ENCODE measurements at regions of chr10 and their contacts with region 1.

Region 1: GRCh38 chr10:89793649-89794254 is 92.4 kb downstream of the KIF20B start:
- DNase-seq: no peak
- ATAC-seq: peak; percentile 61 to 76

Region 2: GRCh38 chr10:89553064-89553734 is 240.6 kb before region 1 on chr10:
- intact Hi-C with region 1: no loop called
- DNase-seq: no peak
- ATAC-seq: peak in 1 of 2 donors; percentile 82

Region 3: DNA sequence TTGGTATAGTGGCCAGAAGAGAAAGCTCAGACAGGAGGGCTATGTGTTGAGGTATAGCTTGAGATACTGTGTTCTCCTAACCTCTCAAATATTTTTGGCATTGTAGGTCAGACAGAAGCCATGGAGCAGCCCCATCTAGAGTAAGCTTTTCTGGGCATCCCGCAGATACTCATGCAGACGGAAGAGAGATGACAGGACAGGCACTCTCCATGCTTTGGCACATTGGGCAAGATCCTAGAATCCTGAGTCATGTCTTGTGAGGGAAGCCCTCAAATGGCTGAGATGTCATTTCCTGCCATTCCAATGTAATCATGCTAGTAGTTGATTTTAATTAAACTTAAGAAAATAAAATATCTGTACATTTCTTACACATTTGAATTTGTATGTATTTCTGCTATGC is 109.1 kb before region 1 on chr10:
- intact Hi-C with region 1: no loop called
- DNase-seq: no peak
- ATAC-seq: peak in 1 of 2 donors; percentile 52

Region 4: GRCh38 chr10:89853781-89854191 is 60.0 kb after region 1 on chr10:
- intact Hi-C with region 1: no loop called
- DNase-seq: no peak
- ATAC-seq: no peak

Region 5: GRCh38 chr10:89873055-89873454 is 79.3 kb after region 1 on chr10:
- intact Hi-C with region 1: no loop called
- DNase-seq: no peak
- ATAC-seq: no peak

Region 6: DNA sequence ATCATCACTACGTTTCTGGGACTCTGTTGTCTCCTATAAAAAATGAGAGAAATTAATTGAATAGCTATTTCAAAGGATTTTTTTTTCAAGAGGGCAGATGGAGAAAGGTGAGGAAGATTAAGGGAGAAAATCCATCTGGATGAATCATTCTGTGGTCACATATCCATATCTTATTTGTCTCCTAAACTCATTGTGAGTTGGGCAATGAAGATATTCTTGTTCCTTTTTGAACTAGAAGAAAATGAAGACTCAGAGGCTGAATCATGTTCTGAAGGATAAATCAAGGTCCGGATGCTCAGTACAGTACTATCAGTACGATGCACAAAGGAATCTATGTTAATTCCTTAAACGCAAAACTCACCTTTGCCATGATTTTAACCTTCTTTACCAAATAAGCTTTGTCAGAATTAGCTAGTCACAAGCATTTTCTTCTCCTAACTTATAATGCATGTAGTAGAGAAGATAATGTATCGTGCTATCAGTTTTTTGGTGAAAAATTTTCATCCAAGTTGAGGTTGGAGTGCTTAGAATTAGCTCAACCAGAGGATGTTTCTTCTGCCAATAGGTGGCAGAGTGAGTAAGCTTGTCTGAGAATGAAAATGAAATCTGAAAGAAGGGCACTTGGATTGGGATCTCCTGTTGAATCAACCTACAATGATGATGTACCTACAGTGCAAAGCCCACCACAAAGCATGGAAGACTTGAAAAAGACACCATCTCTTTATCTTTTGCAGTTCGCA is 354.5 kb after region 1 on chr10:
- intact Hi-C with region 1: loop called in 1 of 2 experiments (anchors 10 kb)
- DNase-seq: no peak
- ATAC-seq: no peak

Region 7: GRCh38 chr10:90592638-90593302 is 799.0 kb after region 1 on chr10:
- intact Hi-C with region 1: loop called in 1 of 2 experiments (anchors 10 kb)
- DNase-seq: peak; percentile 49
- ATAC-seq: peak; percentile 86 to 88

Region 8: DNA sequence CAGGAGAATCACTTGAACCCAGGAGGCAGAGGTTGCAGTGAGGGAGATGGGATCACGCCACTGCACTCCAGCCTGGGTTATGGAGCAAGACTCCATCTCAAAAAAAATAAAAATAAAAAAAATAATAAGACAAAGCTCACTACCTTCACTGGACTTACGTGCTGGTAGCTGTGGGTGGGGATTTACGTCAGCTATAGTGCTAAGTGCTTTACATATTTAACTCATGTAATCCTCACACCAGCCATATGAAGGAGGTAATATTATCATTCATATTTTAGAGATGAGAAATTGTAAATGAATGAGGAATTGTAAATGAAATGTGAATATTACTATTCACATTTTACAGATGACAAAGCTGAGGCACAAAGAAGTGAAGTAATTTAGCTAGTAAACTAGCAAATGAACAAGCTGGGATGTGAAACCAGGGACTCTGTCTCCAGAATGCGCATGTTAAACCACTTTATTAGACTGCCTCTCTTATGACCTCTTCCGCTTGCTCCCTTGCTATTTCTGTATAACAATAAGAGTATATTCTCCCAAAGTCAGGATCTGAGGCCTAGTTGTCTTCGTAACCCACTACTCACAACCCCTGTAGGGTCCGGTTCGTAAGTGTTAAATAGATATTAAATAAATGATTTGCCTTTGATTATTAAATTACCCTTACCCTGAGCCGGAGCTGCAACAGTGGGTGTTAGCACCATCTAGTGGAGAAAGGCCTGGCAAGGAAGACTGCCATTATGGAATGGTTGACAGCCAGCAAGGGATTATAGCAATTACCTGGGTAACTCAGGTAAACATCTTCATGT is 993.8 kb after region 1 on chr10:
- intact Hi-C with region 1: loop called in 1 of 2 experiments (anchors 2 kb)
- DNase-seq: no peak
- ATAC-seq: peak in 1 of 2 donors; percentile 53

Region 9: DNA sequence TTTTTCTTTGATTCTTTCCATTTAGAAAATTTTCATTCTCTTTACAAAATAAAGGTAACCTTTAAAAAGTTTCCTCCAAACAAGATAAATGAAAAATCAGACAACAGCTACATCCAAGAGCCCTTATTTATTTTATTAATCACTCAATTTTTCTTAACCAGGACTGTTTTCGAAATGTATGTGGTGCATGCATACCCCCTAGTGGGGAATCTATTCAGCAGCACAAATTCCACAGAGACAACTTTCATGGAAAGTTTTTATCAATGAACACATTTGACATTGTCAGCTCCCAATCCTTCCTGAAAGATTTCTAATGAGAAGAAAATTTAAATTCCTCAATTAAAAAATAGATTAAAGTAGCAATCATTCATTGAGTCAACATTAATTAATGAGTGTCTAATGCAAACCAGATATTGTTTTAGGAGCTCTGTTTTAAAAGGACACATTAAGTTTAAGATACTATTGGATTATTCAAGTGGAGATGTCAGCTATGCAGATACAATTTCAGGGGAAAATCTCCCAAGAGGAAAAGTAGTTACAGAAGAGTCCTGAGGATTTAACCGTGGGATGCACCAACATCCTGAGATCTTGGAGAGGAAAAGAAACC is 1069.3 kb after region 1 on chr10:
- intact Hi-C with region 1: loop called in 1 of 2 experiments (anchors 5 kb)
- DNase-seq: no peak
- ATAC-seq: peak in 1 of 2 donors; percentile 33

Measured in left cardiac atrium (tissue), 4 donors.